Thyroid gland (tissue), 4 donors: ENCODE measurements at regions of chr2 and their contacts with region 1.

Region 1: GRCh38 chr2:64914735-64915509 is 74.3 kb upstream of the SLC1A4 start:
- DNase-seq: no peak
- H3K4me3 ChIP-seq: no peak overlapping the region
- H3K27ac ChIP-seq: no peak overlapping the region
- H3K4me1 ChIP-seq: no peaks in the 10 kb centered on the region
- H3K27me3 ChIP-seq: no peaks in the 10 kb centered on the region
- CTCF ChIP-seq: no peak
- POLR2A ChIP-seq: no peak

Region 2: GRCh38 chr2:64330281-64331113 is 584.4 kb before region 1 on chr2:
- intact Hi-C with region 1: no loop called
- DNase-seq: peak; percentile 72 to 84
- H3K4me3 ChIP-seq: no peak overlapping the region
- H3K27ac ChIP-seq: peak overlapping the region in 2 of 3 donors; percentile 27 to 53
- H3K4me1 ChIP-seq: peaks cover 4 to 14% of the 10 kb centered on the region in 2 donors
- H3K27me3 ChIP-seq: no peaks in the 10 kb centered on the region
- CTCF ChIP-seq: peak; percentile 84 to 96 (median 88)
- POLR2A ChIP-seq: no peak

Region 3: GRCh38 chr2:65040400-65041261 is 125.7 kb after region 1 on chr2:
- intact Hi-C with region 1: loop called (anchors 2 kb)
- DNase-seq: peak; percentile 86
- H3K4me3 ChIP-seq: no peak overlapping the region
- H3K27ac ChIP-seq: no peak overlapping the region
- H3K4me1 ChIP-seq: no peaks in the 10 kb centered on the region
- H3K27me3 ChIP-seq: no peaks in the 10 kb centered on the region
- CTCF ChIP-seq: peak; percentile 80 to 96 (median 92)
- POLR2A ChIP-seq: no peak

Region 4: DNA sequence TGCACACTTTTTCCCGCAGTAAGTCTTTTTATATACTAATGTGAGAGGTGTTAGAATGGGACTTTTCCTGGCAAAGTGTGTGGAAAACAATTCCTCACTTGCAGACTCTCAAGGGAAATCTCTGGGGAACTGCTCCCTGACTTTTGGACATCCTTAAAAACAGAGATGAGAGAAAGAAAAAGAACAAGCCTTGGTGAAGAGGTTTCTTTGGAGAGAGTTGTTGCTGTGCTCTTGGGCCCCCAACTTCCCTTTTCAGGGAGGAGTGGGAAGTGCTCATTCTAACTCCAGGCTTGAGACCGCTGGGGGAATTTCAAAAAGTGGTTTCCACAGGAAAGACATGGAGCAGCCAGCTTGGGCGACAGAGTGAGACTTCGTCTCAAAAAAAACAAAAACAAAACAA is 660.1 kb after region 1 on chr2:
- intact Hi-C with region 1: loop called (anchors 5 kb)
- DNase-seq: no peak
- H3K4me3 ChIP-seq: no peak overlapping the region
- H3K27ac ChIP-seq: peak overlapping the region in 1 of 3 donors; percentile 23
- H3K4me1 ChIP-seq: no peaks in the 10 kb centered on the region
- H3K27me3 ChIP-seq: no peaks in the 10 kb centered on the region
- CTCF ChIP-seq: no peak
- POLR2A ChIP-seq: no peak